ENCODE measurements at regions of chr11 and their contacts with region 1.

Region 1: DNA sequence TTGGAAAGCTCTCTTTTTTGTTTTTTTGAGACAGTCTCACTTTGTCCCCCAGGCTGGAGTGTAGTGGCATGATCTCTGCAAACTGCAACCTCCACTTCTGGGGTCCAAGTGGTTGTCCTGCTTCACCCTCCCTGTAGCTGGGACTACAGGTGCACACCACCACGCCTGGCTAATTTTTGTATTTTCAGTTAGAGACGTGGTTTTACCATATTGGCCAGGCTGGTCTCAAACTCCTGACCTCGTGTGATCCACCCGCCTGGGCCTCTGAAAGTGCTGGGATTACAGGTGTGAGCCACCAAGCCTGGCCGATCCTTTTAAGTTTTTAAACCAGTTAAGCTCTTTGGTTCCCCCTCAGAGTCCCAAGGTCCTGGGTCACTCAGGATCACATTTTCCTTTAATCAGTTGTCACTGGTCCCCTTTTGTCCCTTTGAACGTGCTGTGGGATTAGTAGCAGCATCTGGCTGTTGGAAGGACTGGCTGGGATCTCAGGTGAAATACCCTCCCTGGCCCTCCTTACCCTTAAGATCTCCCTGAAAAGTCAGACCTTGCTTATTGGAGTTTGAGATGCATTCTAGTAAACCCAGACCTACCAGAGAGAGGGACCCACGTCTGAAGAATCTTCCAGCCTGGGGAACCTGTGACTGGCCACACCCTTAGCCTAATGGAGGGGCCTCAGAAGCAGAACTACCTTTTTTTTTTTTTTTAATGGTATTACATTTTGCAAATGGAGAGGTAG is 8.1 kb downstream of the MALAT1 start:
- DNase-seq: peak; percentile 61
- H3K4me3 ChIP-seq: peak overlapping the region in 2 of 3 experiments; percentile 91 to 98
- H3K27ac ChIP-seq: peak overlapping the region; percentile 89
- H3K4me1 ChIP-seq: peaks cover 24% of the 10 kb centered on the region
- H3K27me3 ChIP-seq: no peaks in the 10 kb centered on the region
- CTCF ChIP-seq: no peak
- POLR2A ChIP-seq: peak; percentile 87

Region 2: DNA sequence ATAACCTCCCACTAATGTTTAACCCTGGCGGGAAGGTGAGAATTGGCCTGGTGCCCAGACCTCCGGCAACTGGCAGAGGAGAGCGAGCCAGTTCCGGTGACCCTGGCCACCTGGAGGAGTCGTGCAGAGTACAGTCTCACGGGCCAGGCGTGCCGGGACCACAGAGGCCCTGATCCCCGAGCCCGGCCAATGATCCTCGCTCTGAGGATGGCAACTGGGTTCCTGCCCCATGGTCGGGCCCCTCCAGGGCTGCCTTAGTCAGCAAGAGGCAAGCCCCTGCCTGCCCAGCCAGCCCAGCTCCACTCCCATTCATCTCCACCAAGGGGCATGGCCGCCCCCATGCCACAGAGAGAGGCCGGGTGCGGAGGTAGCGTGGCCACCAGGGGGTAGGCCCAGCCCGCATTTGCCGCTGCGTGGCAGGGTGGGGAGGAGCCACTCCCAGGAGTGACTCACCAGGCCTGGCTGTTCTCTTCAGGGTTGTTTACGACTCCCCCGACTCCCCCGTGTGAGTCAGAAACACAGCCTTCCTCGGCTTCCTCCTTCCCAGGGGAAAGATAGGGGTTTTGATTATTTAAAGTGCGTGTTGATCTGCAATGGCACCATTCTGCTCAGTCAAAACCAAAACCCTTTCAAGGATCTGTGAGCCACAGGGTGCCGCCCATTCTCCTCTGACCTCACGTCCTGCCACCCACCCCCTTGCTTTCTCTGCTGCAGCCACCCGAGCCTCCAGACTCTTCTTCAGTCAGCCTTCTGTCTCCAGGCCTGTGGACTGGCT is 124.7 kb before region 1 on chr11 and contains the start of gene SLC25A45:
- CTCF ChIA-PET with region 1: interaction called, 23 read pairs
- POLR2A ChIA-PET with region 1: interaction called, 5 read pairs
- dilution Hi-C with region 1: no loop called
- intact Hi-C with region 1: loop called (anchors 1 kb)
- DNase-seq: peak; percentile 99
- H3K4me3 ChIP-seq: peak within 1 kb of the TSS in 1 of 3 experiments; percentile 20
- H3K27ac ChIP-seq: peak within 1 kb of the TSS; percentile 95
- H3K4me1 ChIP-seq: peaks cover 41% of the 10 kb centered on the region
- H3K27me3 ChIP-seq: no peaks in the 10 kb centered on the region
- CTCF ChIP-seq: peak; percentile 89 to 90
- POLR2A ChIP-seq: peak; percentile 84
- total RNA-seq, gene SLC25A45: 3.1 and 4.8 TPM in 2 replicates

Region 3: DNA sequence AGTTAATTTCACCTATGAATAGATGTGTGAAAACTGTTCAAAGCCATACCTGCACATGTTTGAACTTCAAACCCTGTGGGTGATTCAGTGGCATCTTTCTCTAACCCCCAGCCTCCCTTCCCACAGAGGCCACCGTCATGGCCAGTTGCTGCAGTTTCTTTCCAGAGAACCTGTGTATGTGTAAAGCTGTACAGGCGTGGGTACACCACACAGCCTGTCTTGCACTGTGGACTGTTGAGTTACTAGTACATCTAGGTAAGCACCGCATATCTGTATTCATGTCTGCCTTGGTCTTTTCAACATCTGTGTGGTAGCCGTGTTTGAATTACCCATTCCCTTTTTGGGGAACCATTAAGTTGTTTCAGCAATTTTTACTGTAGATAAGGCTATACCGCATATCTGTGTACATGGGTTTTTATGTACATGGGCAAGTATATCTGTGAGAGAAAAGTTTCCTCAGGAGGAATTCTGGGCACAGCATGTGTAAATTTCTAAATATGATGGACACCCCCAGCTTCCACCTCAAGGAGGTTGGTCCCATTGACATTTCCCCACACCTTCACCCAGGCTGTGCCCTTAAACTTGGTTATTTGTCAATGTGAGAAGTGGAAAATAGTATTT is 70.4 kb before region 1 on chr11:
- CTCF ChIA-PET with region 1: interaction called, 14 read pairs
- POLR2A ChIA-PET with region 1: interaction called, 4 read pairs
- dilution Hi-C with region 1: no loop called
- intact Hi-C with region 1: no loop called
- DNase-seq: peak; percentile 37
- H3K4me3 ChIP-seq: no peak overlapping the region
- H3K27ac ChIP-seq: no peak overlapping the region
- H3K4me1 ChIP-seq: peaks cover 10% of the 10 kb centered on the region
- H3K27me3 ChIP-seq: no peaks in the 10 kb centered on the region
- CTCF ChIP-seq: no peak
- POLR2A ChIP-seq: no peak

Region 4: GRCh38 chr11:65454696-65455456 is 52.1 kb before region 1 on chr11:
- CTCF ChIA-PET with region 1: interaction called, 9 read pairs
- POLR2A ChIA-PET with region 1: interaction called, 40 read pairs
- dilution Hi-C with region 1: no loop called
- intact Hi-C with region 1: no loop called
- DNase-seq: peak; percentile 93
- H3K4me3 ChIP-seq: peak overlapping the region; percentile 27 to 60 (median 53)
- H3K27ac ChIP-seq: peak overlapping the region; percentile 51
- H3K4me1 ChIP-seq: no peaks in the 10 kb centered on the region
- H3K27me3 ChIP-seq: no peaks in the 10 kb centered on the region
- CTCF ChIP-seq: peak in 1 of 2 donors; percentile 37
- POLR2A ChIP-seq: peak; percentile 94

Region 5: GRCh38 chr11:65477149-65477965 is 29.6 kb before region 1 on chr11:
- CTCF ChIA-PET with region 1: interaction called, 95 read pairs
- POLR2A ChIA-PET with region 1: interaction called, 283 read pairs
- dilution Hi-C with region 1: no loop called
- intact Hi-C with region 1: loop called (anchors 1 kb)
- DNase-seq: peak; percentile 94
- H3K4me3 ChIP-seq: peak overlapping the region; percentile 35 to 56 (median 54)
- H3K27ac ChIP-seq: peak overlapping the region; percentile 88
- H3K4me1 ChIP-seq: peaks cover 26% of the 10 kb centered on the region
- H3K27me3 ChIP-seq: no peaks in the 10 kb centered on the region
- CTCF ChIP-seq: no peak
- POLR2A ChIP-seq: peak; percentile 95

Region 6: GRCh38 chr11:65633390-65634108 is 126.6 kb after region 1 on chr11:
- CTCF ChIA-PET with region 1: no interaction called
- POLR2A ChIA-PET with region 1: no interaction called
- dilution Hi-C with region 1: no loop called
- intact Hi-C with region 1: no loop called
- DNase-seq: no peak
- H3K4me3 ChIP-seq: no peak overlapping the region
- H3K27ac ChIP-seq: no peak overlapping the region
- H3K4me1 ChIP-seq: peaks cover 9% of the 10 kb centered on the region
- H3K27me3 ChIP-seq: no peaks in the 10 kb centered on the region
- CTCF ChIP-seq: no peak
- POLR2A ChIP-seq: no peak

Region 7: DNA sequence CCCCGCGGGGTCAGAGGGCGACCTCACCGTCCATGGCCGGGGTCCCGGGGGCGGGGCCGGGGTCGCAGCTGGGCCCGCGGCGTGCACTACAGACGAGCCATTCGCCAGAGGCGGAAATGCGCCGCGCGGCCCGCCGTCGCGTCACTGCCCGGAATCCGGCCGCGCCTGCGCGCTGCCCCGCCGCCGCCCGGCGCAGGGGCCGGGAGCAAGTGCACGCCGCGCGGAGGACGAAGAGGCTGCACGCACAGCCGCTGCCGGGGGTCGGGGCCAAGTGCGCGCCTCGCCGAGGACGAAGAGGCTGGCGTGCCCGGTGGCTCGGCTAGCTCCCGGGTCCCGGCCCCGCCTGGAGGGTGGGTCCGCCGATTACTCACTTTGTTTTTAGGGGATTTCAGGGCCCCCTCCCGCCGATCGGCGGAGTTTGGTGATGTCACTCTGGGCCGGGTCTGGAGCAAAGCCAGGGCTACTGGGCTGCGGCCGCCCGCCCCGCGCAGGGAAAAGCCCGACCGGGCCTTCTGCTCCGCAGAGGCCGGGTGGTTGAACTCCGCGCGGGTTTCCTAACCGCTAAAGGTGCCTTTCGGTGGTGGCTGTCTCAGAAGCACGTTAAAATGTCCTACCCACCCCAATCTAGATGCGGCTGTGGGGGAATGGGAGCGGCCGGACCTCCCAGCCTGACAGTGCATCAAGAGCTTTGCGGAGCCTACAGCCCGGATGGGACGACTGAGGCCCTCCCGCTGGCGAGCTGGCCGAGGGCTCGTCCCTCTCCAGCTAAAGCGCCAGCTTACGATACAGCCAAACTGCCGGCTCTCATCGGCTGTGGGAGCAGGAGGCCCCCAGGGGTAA is 156.1 kb after region 1 on chr11 and contains the start of gene RELA:
- CTCF ChIA-PET with region 1: no interaction called
- POLR2A ChIA-PET with region 1: no interaction called
- dilution Hi-C with region 1: no loop called
- intact Hi-C with region 1: no loop called
- DNase-seq: peak; percentile 92
- H3K4me3 ChIP-seq: peak within 1 kb of the TSS; percentile 34 to 94 (median 77)
- H3K27ac ChIP-seq: peak within 1 kb of the TSS; percentile 91
- H3K4me1 ChIP-seq: peaks cover 18% of the 10 kb centered on the region
- H3K27me3 ChIP-seq: no peaks in the 10 kb centered on the region
- CTCF ChIP-seq: no peak
- POLR2A ChIP-seq: peak; percentile 87
- total RNA-seq, gene RELA: 105 and 106 TPM in 2 replicates

Region 8: GRCh38 chr11:65743928-65744698 is 237.2 kb after region 1 on chr11:
- CTCF ChIA-PET with region 1: no interaction called
- POLR2A ChIA-PET with region 1: no interaction called
- dilution Hi-C with region 1: no loop called
- intact Hi-C with region 1: no loop called
- DNase-seq: peak; percentile 28
- H3K4me3 ChIP-seq: no peak overlapping the region
- H3K27ac ChIP-seq: no peak overlapping the region
- H3K4me1 ChIP-seq: no peaks in the 10 kb centered on the region
- H3K27me3 ChIP-seq: peaks cover 8 to 18% of the 10 kb centered on the region in 2 experiments
- CTCF ChIP-seq: peak in 1 of 2 donors; percentile 15
- POLR2A ChIP-seq: no peak